PC-3 (cell line): ENCODE measurements at regions of chr3 and their contacts with region 1.

Region 1: DNA sequence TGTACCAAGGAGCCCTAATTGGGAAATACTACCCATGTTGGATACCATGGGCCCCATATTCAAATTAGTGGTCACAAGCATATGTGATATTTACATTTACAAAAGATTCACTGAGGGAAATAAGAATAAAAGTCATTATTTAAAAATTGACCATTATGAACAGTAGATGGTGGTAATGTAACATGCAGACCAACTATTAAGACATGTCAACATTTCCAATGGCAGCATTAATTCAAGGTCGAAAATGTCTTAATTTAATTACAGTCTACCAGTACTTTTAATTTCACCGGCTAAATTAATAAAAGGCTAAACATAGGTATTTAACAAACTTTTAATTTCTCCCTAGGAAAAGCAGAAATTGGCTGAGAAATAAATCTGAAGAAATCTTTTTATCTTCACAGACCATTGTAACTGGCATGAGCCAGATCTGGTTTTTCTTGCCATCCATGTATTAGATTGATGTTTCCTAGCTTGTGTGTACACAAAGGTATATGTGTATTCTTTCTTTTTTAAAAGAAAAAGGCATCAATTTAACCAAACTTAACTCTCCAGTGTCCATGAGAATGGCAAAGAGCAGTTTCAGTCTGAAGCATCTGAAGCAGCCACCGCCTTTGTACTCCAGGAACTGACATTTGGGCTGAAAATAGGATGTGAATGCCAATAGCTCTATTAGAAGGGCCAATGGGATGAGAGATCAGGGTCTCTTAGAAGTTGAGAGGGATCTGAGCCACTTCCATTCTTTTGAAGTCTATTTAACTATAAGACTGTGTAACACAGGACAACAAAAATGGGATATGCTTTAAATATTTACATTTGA is 26.6 kb downstream of the NEK11 start:
- DNase-seq: peak; percentile 28
- ATAC-seq: 0 out of 2 replicates have a peak, but pooled peaks have one; percentile 27
- H3K4me3 ChIP-seq: no peak overlapping the region
- H3K27ac ChIP-seq: no peak overlapping the region
- H3K4me1 ChIP-seq: no peaks in the 10 kb centered on the region
- H3K27me3 ChIP-seq: no peaks in the 10 kb centered on the region
- CTCF ChIP-seq: peak; percentile 56

Region 2: GRCh38 chr3:131107637-131108433 is 54.6 kb after region 1 on chr3:
- CTCF ChIA-PET with region 1: no interaction called
- POLR2A ChIA-PET with region 1: no interaction called
- intact Hi-C with region 1: loop called (anchors 5 kb)
- DNase-seq: peak; percentile 78
- ATAC-seq: peak; percentile 93
- H3K4me3 ChIP-seq: peak overlapping the region; percentile 6; the same call in 1 of the 2 replicates
- H3K27ac ChIP-seq: peak overlapping the region; percentile 67
- H3K4me1 ChIP-seq: peaks cover 32% of the 10 kb centered on the region
- H3K27me3 ChIP-seq: no peaks in the 10 kb centered on the region
- CTCF ChIP-seq: no peak

Region 3: GRCh38 chr3:131142580-131142979 is 89.3 kb after region 1 on chr3:
- CTCF ChIA-PET with region 1: no interaction called
- POLR2A ChIA-PET with region 1: no interaction called
- intact Hi-C with region 1: loop called (anchors 1 kb)
- DNase-seq: peak; percentile 35
- ATAC-seq: peak; percentile 73
- H3K4me3 ChIP-seq: no peak overlapping the region
- H3K27ac ChIP-seq: no peak overlapping the region
- H3K4me1 ChIP-seq: no peaks in the 10 kb centered on the region
- H3K27me3 ChIP-seq: no peaks in the 10 kb centered on the region
- CTCF ChIP-seq: peak; percentile 51

Region 4: DNA sequence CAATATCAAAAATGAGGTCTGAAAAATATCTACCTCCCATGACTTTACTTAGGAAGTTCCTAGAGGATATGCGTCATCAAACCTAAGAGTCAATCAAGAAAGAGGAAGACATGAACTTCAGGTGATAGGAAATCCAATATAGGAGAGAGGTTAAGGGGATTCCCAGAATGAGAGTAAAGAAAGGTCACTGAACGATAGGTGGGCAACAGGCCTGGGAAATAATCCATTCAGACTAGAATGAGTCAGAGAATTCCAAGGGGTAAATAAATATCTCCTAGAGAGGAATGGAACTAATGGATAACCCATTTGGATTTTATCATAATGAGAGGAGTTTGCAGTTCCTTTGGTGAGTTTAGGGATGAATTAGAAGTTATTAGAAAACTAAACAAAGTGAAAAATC is 197.2 kb after region 1 on chr3:
- CTCF ChIA-PET with region 1: no interaction called
- POLR2A ChIA-PET with region 1: no interaction called
- intact Hi-C with region 1: no loop called
- DNase-seq: no peak
- ATAC-seq: no peak
- H3K4me3 ChIP-seq: no peak overlapping the region
- H3K27ac ChIP-seq: no peak overlapping the region
- H3K4me1 ChIP-seq: no peaks in the 10 kb centered on the region
- H3K27me3 ChIP-seq: no peaks in the 10 kb centered on the region
- CTCF ChIP-seq: no peak

Region 5: GRCh38 chr3:131381444-131382291 is 328.4 kb after region 1 on chr3 and contains the start of gene NUDT16:
- CTCF ChIA-PET with region 1: no interaction called
- POLR2A ChIA-PET with region 1: no interaction called
- intact Hi-C with region 1: loop called (anchors 5 kb)
- DNase-seq: peak; percentile 97
- ATAC-seq: peak; percentile 97
- H3K4me3 ChIP-seq: peak within 1 kb of the TSS; percentile 83
- H3K27ac ChIP-seq: no peak within 1 kb of the TSS
- H3K4me1 ChIP-seq: peaks cover 6% of the 10 kb centered on the region; the same call in 1 of the 2 replicates
- H3K27me3 ChIP-seq: no peaks in the 10 kb centered on the region
- CTCF ChIP-seq: no peak
- total RNA-seq, gene NUDT16: 7.9 and 8.6 TPM in 2 replicates

Region 6: GRCh38 chr3:131568460-131568859 is 515.2 kb after region 1 on chr3:
- CTCF ChIA-PET with region 1: no interaction called
- POLR2A ChIA-PET with region 1: no interaction called
- intact Hi-C with region 1: no loop called
- DNase-seq: peak; percentile 6
- ATAC-seq: no peak
- H3K4me3 ChIP-seq: no peak overlapping the region
- H3K27ac ChIP-seq: no peak overlapping the region
- H3K4me1 ChIP-seq: peaks cover 11% of the 10 kb centered on the region
- H3K27me3 ChIP-seq: no peaks in the 10 kb centered on the region
- CTCF ChIP-seq: peak; percentile 22; the same call in 1 of the 2 replicates